CD4-positive, alpha-beta T cell (primary cell): ENCODE measurements at regions of chr14 and their contacts with region 1.

Region 1: GRCh38 chr14:98984719-98985041 is 287.3 kb downstream of the BCL11B start:
- DNase-seq: peak; percentile 49 to 92 (median 66)
- ATAC-seq: peak; percentile 86
- H3K4me3 ChIP-seq: peak overlapping the region; percentile 28
- H3K4me3 Mint-ChIP-seq: peak overlapping the region; percentile 81
- H3K27ac ChIP-seq: peak overlapping the region; percentile 31 to 77
- H3K27ac Mint-ChIP-seq: peak overlapping the region; percentile 89
- H3K4me1 ChIP-seq: peaks cover 32% of the 10 kb centered on the region
- H3K4me1 Mint-ChIP-seq: peaks cover 54% of the 10 kb centered on the region
- H3K27me3 ChIP-seq: no peaks in the 10 kb centered on the region
- H3K27me3 Mint-ChIP-seq: no peaks in the 10 kb centered on the region
- CTCF ChIP-seq: no peak

Region 2: GRCh38 chr14:97264516-97265230 is 1720.0 kb before region 1 on chr14:
- CTCF ChIA-PET with region 1: no interaction called
- POLR2A ChIA-PET with region 1: no interaction called
- intact Hi-C with region 1: no loop called
- DNase-seq: no peak
- ATAC-seq: no peak
- H3K4me3 ChIP-seq: no peak overlapping the region
- H3K4me3 Mint-ChIP-seq: no peak overlapping the region
- H3K27ac ChIP-seq: no peak overlapping the region
- H3K27ac Mint-ChIP-seq: no peak overlapping the region
- H3K4me1 ChIP-seq: no peaks in the 10 kb centered on the region
- H3K4me1 Mint-ChIP-seq: no peaks in the 10 kb centered on the region
- H3K27me3 ChIP-seq: no peaks in the 10 kb centered on the region
- H3K27me3 Mint-ChIP-seq: peaks cover 7% of the 10 kb centered on the region
- CTCF ChIP-seq: no peak

Region 3: GRCh38 chr14:98937712-98938505 is 46.8 kb before region 1 on chr14:
- CTCF ChIA-PET with region 1: no interaction called
- POLR2A ChIA-PET with region 1: interaction called, 29 read pairs
- intact Hi-C with region 1: loop called (anchors 5 kb)
- DNase-seq: peak in 4 of 14 experiments; percentile 4 to 48 (median 14)
- ATAC-seq: peak; percentile 49
- H3K4me3 ChIP-seq: no peak overlapping the region
- H3K4me3 Mint-ChIP-seq: peak overlapping the region; percentile 2
- H3K27ac ChIP-seq: no peak overlapping the region
- H3K27ac Mint-ChIP-seq: peak overlapping the region; percentile 13
- H3K4me1 ChIP-seq: peaks cover 64% of the 10 kb centered on the region
- H3K4me1 Mint-ChIP-seq: peaks cover 96% of the 10 kb centered on the region
- H3K27me3 ChIP-seq: no peaks in the 10 kb centered on the region
- H3K27me3 Mint-ChIP-seq: no peaks in the 10 kb centered on the region
- CTCF ChIP-seq: no peak

Region 4: GRCh38 chr14:99093532-99094517 is 109.1 kb after region 1 on chr14:
- CTCF ChIA-PET with region 1: no interaction called
- POLR2A ChIA-PET with region 1: no interaction called
- intact Hi-C with region 1: no loop called
- DNase-seq: no peak
- ATAC-seq: no peak
- H3K4me3 ChIP-seq: no peak overlapping the region
- H3K4me3 Mint-ChIP-seq: no peak overlapping the region
- H3K27ac ChIP-seq: no peak overlapping the region
- H3K27ac Mint-ChIP-seq: no peak overlapping the region
- H3K4me1 ChIP-seq: no peaks in the 10 kb centered on the region
- H3K4me1 Mint-ChIP-seq: no peaks in the 10 kb centered on the region
- H3K27me3 ChIP-seq: no peaks in the 10 kb centered on the region
- H3K27me3 Mint-ChIP-seq: no peaks in the 10 kb centered on the region
- CTCF ChIP-seq: no peak